Heart left ventricle (tissue), 16 donors: ENCODE measurements at regions of chr19 and their contacts with region 1.

Region 1: DNA sequence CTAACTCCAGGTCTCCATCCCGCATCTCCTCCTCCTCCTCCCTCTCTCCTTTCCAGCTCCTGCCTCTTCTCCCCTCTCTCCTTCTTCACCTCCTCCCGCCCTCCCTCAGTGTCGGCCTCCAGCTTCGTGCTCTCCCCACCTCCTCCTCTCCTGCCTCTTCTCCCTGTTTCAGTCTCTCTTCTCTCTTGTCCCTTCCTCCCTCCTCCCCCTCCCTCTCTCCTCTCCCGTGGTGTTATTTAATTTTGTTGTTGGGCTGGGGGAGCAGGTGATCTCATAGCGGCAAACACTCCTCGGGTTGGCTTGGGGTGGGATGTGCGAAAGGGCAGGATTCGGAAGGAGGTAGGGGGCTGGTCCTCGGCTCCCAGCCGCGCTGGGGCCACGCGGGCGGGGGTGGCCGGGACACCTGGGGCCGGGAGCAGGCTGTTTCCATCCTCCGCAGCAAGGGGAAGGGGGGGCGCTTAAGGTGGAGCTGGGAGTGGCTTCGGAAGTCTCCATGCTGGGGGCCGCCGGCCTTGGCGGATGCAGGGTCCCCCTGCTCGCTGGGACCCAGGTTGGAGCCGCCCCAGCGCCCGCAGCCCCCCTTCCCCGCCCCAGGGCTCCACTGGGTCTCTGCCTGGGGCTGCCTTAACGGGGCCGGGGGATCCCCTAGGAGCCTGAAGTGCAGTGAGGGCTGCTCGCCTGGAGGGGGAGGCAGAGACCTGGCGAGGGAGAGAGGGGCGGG is at the start of gene CA11:
- DNase-seq: peak; percentile 89 to 94 (median 91)
- ATAC-seq: peak; percentile 69 to 92 (median 92)
- H3K4me3 ChIP-seq: peak within 1 kb of the TSS; percentile 2 to 69 (median 58)
- H3K27ac ChIP-seq: peak within 1 kb of the TSS; percentile 56 to 91 (median 82)
- H3K4me1 ChIP-seq: peaks cover 0 to 29% (median 13%) of the 10 kb centered on the region in 12 donors
- H3K27me3 ChIP-seq: no peaks in the 10 kb centered on the region
- CTCF ChIP-seq: peak; percentile 82 to 98 (median 90)
- POLR2A ChIP-seq: no peak
- total RNA-seq, gene CA11: 2.2 to 14.6 (median 5.8) TPM

Region 2: DNA sequence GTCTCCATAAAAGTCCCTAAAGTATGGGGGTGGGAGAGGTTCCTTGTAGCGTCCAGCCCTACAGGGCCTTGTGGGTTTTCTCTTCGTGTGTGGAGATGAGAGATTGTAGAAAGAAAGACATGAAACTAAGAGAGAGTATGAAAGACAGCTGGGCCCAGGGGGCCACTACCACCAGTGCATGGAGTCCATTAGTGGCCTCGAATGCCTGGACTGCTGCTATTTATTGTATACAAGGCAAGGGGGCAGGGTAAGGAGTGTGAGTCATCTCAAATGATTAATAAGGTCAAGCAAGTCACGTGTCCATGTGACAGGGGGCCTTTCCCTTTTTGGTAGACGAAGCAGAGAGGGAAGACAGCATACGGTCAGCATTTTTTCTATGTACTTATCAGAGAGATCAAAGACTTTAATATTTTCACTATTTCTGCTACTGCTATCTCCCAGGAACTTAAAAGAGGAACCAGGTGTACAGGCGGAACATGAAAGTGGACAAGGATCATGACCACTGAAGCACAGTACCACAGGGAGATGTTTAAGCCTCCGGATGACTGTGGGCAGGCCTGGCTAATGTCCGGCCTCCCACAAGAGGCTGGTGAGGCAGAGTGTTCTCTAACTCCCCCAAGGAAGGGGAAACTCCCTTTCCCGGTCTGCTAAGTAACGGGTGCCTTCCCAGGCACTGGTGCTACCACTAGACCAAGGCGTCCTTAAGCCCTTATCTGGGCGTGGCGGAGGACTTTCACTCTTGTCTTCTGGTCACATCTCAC is 134.7 kb after region 1 on chr19:
- intact Hi-C with region 1: loop called in 4 of 10 experiments (anchors 2 to 5 kb)
- DNase-seq: no peak
- ATAC-seq: peak in 2 of 4 donors; percentile 18 to 30
- H3K4me3 ChIP-seq: no peak overlapping the region
- H3K27ac ChIP-seq: peak overlapping the region in 10 of 12 donors; percentile 6 to 83 (median 61)
- H3K4me1 ChIP-seq: peaks cover 0 to 26% (median 8%) of the 10 kb centered on the region in 12 donors
- H3K27me3 ChIP-seq: no peaks in the 10 kb centered on the region
- CTCF ChIP-seq: no peak
- POLR2A ChIP-seq: no peak

Region 3: GRCh38 chr19:48835734-48836088 is 189.6 kb after region 1 on chr19:
- intact Hi-C with region 1: loop called in 7 of 10 experiments (anchors 5 to 10 kb)
- DNase-seq: peak; percentile 88 to 95 (median 91)
- ATAC-seq: peak; percentile 84 to 95 (median 94)
- H3K4me3 ChIP-seq: peak overlapping the region in 11 of 12 donors; percentile 2 to 57 (median 47)
- H3K27ac ChIP-seq: peak overlapping the region in 7 of 12 donors; percentile 52 to 86 (median 69)
- H3K4me1 ChIP-seq: peaks cover 0 to 19% (median 10%) of the 10 kb centered on the region in 12 donors
- H3K27me3 ChIP-seq: peaks cover 0 to 4% (median 0%) of the 10 kb centered on the region in 9 donors
- CTCF ChIP-seq: peak; percentile 76 to 94 (median 88)
- POLR2A ChIP-seq: no peak

Region 4: DNA sequence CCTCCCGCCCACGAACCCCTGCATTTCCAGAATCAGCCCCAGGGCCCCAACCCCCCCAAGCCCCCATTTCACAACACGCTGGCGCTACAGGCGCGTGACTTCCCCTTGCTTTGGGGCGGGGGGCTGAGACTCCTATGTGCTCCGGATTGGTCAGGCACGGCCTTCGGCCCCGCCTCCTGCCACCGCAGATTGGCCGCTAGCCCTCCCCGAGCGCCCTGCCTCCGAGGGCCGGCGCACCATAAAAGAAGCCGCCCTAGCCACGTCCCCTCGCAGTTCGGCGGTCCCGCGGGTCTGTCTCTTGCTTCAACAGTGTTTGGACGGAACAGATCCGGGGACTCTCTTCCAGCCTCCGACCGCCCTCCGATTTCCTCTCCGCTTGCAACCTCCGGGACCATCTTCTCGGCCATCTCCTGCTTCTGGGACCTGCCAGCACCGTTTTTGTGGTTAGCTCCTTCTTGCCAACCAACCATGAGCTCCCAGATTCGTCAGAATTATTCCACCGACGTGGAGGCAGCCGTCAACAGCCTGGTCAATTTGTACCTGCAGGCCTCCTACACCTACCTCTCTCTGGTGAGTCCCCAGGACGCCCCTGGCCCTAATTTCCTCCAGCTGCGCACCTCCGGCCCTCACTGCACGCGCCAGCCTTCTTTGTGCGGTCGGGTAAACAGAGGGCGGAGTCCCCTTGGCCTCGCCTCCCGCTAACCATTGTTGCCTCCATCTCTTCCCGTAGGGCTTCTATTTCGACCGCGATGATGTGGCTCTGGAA is 319.1 kb after region 1 on chr19 and contains the start of gene FTL:
- intact Hi-C with region 1: loop called in 2 of 10 experiments (anchors 10 kb)
- DNase-seq: peak; percentile 98 to 99 (median 98)
- ATAC-seq: peak; percentile 85 to 92 (median 88)
- H3K4me3 ChIP-seq: peak within 1 kb of the TSS; percentile 61 to 99 (median 88)
- H3K27ac ChIP-seq: peak within 1 kb of the TSS; percentile 73 to 97 (median 93)
- H3K4me1 ChIP-seq: peaks cover 10 to 65% (median 47%) of the 10 kb centered on the region in 12 donors
- H3K27me3 ChIP-seq: no peaks in the 10 kb centered on the region
- CTCF ChIP-seq: no peak
- POLR2A ChIP-seq: peak; percentile 98 to 100
- total RNA-seq, gene FTL: 484 to 6,770 (median 857) TPM